Activated CD4-positive, alpha-beta memory T cell treated with anti-CD3 and anti-CD28 coated beads, Interleukin-2, amount 10 ng/mL, durations not matched to agents 7 days and 5 days (primary cell): ENCODE measurements at regions of chr3 and their contacts with region 1.

Region 1: DNA sequence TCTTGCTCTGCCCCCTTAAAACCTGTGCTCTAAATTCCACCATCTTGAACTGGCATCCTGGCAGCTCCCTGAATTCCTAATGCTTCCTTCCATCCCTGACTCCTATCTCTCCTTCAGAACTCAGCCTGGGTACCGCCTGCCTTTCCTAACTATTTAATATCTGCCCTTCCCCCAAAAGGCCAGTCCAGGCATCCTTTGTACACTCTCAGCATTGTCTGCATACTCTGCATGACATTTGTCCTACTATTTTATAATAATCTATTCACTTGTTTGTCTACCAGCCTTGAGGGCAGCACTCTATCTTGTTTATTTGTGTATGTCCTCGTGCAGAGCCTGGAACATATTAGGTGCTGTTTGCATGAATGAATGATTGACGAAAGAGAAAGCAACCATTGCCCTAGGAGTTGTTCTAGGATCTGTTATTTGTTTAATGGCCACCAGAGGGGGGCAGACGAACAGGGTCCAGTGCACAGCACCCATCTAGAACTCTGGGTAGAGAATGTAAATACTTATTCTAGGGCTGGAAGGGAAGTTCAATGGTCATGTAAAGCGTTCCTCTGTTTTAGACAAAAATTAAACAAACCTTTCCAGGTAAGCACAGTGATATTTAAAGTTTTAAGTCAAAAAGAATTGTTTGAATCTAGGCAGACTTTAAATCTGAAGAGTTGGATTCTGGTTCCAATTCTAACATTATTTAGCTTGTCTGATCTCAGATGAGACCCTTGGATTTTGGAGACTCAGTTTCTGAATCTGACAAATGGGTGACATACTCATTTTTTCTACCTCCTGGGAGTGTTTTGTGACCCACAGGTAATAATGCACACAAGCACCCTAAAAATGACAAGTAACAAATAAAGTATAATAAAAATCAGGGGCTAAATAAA is 125.8 kb upstream of the GALNT15 start:
- DNase-seq: peak; percentile 49
- H3K4me3 Mint-ChIP-seq: peak overlapping the region; percentile 30
- H3K27ac Mint-ChIP-seq: no peak overlapping the region
- H3K4me1 Mint-ChIP-seq: peaks cover 9% of the 10 kb centered on the region
- H3K27me3 Mint-ChIP-seq: no peaks in the 10 kb centered on the region

Region 2: GRCh38 chr3:16177962-16178627 is 129.4 kb after region 1 on chr3:
- CTCF ChIA-PET with region 1: interaction called, 21 read pairs
- POLR2A ChIA-PET with region 1: interaction called, 3 read pairs
- DNase-seq: peak; percentile 63
- H3K4me3 Mint-ChIP-seq: no peak overlapping the region
- H3K27ac Mint-ChIP-seq: no peak overlapping the region
- H3K4me1 Mint-ChIP-seq: no peaks in the 10 kb centered on the region
- H3K27me3 Mint-ChIP-seq: peaks cover 29% of the 10 kb centered on the region

Region 3: GRCh38 chr3:16247276-16248061 is 198.8 kb after region 1 on chr3:
- CTCF ChIA-PET with region 1: interaction called, 17 read pairs
- POLR2A ChIA-PET with region 1: no interaction called
- DNase-seq: peak; percentile 81
- H3K4me3 Mint-ChIP-seq: no peak overlapping the region
- H3K27ac Mint-ChIP-seq: no peak overlapping the region
- H3K4me1 Mint-ChIP-seq: peaks cover 28% of the 10 kb centered on the region
- H3K27me3 Mint-ChIP-seq: no peaks in the 10 kb centered on the region